AG04449 (cell line): ENCODE measurements at regions of chr1 and their contacts with region 1.

Region 1: GRCh38 chr1:66752671-66753371 is 562 bp downstream of the DYNLT5 start:
- DNase-seq: no peak
- H3K4me3 ChIP-seq: peak overlapping the region; percentile 53
- CTCF ChIP-seq: no peak

Region 2: DNA sequence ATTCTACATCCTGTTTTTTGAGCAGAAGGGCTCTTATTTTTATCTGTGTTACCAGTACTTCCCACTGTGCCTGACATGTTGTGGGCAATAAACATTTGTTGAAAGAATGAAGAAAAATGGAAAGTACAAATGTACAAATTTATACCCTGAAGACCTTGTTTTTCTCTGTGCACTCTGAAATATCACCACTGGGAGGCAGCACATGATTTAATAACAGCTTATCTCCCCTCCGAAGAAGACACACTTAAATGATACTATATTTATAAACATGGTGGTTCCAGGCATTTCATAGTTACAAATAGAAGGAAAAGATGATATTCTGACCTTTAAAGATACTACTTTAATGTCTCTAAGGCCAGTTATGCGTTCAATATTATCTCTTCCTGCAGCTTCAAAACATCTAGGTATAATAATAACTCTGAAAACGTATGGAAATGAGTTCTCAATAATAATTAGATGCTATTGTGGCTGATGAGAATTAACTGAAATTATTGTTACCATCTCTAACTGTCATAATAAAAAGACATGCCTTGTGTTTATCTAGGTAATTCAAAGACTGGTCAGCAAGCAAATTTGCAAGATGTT is 12.3 kb after region 1 on chr1:
- CTCF ChIA-PET with region 1: interaction called, 10 read pairs
- POLR2A ChIA-PET with region 1: no interaction called
- DNase-seq: peak; percentile 10
- H3K4me3 ChIP-seq: no peak overlapping the region
- CTCF ChIP-seq: peak; percentile 50